ENCODE measurements at regions of chr9 and their contacts with region 1.

Region 1: GRCh38 chr9:3478549-3478953 is 47.2 kb downstream of the RFX3 start:
- DNase-seq: no peak
- ATAC-seq: peak; percentile 65
- H3K4me3 Mint-ChIP-seq: peak overlapping the region; percentile 55
- H3K27ac Mint-ChIP-seq: peak overlapping the region; percentile 94
- H3K4me1 Mint-ChIP-seq: peaks cover 68% of the 10 kb centered on the region
- H3K27me3 Mint-ChIP-seq: no peaks in the 10 kb centered on the region
- CTCF ChIP-seq: no peak

Region 2: GRCh38 chr9:3398232-3398648 is 80.3 kb before region 1 on chr9:
- CTCF ChIA-PET with region 1: no interaction called
- POLR2A ChIA-PET with region 1: no interaction called
- intact Hi-C with region 1: loop called (anchors 5 kb)
- DNase-seq: no peak
- ATAC-seq: peak; percentile 65
- H3K4me3 Mint-ChIP-seq: peak overlapping the region; percentile 79
- H3K27ac Mint-ChIP-seq: peak overlapping the region; percentile 88
- H3K4me1 Mint-ChIP-seq: peaks cover 32% of the 10 kb centered on the region
- H3K27me3 Mint-ChIP-seq: no peaks in the 10 kb centered on the region
- CTCF ChIP-seq: no peak

Region 3: DNA sequence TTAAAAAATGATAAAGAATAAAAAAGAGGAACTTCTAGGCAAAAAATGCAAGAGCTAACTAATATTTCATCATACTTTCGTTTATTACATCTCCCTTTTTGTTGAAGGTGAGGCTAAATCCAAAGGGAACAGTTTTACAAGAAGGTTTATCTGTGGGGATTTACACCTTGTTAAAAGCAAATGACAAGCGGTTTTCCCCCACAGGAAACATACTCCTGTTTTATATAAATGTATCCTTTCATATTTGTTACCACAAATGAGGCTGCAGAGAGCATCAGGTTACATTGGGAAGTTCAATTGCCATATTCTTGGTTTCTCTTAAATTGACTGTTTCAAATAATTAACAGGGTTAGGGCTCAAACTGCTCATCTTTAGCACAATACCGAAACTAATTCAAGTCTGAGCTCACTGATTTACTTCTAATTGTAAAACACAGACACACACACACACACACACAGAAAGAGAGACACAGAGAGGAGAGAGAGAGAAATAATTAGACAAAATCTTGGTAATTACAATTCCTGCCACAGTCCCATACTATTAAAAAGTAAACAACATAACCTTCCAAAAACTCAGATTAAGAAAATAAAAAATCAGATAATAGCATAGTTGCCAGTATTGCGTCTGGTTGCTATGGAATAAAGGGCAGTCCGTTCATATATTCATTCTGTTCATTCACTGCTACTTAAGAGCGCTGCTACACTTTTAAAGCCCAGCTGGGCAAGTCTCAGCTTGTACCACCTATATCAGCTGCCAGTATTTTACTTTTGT is 30.2 kb after region 1 on chr9:
- CTCF ChIA-PET with region 1: interaction called, 4 read pairs
- POLR2A ChIA-PET with region 1: interaction called, 21 read pairs
- intact Hi-C with region 1: loop called (anchors 1 kb)
- DNase-seq: no peak
- ATAC-seq: peak; percentile 53
- H3K4me3 Mint-ChIP-seq: peak overlapping the region; percentile 78
- H3K27ac Mint-ChIP-seq: peak overlapping the region; percentile 92
- H3K4me1 Mint-ChIP-seq: peaks cover 44% of the 10 kb centered on the region
- H3K27me3 Mint-ChIP-seq: no peaks in the 10 kb centered on the region
- CTCF ChIP-seq: no peak

Measured in activated B cell treated with CpG ODN at 0.5 μM for 24 hours (primary cell).